IMR-90 (cell line): ENCODE measurements at regions of chr3 and their contacts with region 1.

Region 1: GRCh38 chr3:133377396-133377795 is 22.5 kb upstream of the BFSP2 start:
- DNase-seq: peak; percentile 69
- ATAC-seq: peak; percentile 90
- H3K4me3 ChIP-seq: no peak overlapping the region
- H3K27ac ChIP-seq: no peak overlapping the region
- H3K4me1 ChIP-seq: no peaks in the 10 kb centered on the region
- H3K27me3 ChIP-seq: no peaks in the 10 kb centered on the region
- CTCF ChIP-seq: peak; percentile 70
- POLR2A ChIP-seq: no peak
- RAD21 ChIP-seq: peak; percentile 84

Region 2: GRCh38 chr3:133040696-133041523 is 336.5 kb before region 1 on chr3:
- CTCF ChIA-PET with region 1: interaction called, 23 read pairs
- POLR2A ChIA-PET with region 1: no interaction called
- dilution Hi-C with region 1: no loop called
- in situ Hi-C with region 1: no loop called
- intact Hi-C with region 1: loop called (anchors 1 kb)
- DNase-seq: peak; percentile 71
- ATAC-seq: peak; percentile 92
- H3K4me3 ChIP-seq: no peak overlapping the region
- H3K27ac ChIP-seq: no peak overlapping the region
- H3K4me1 ChIP-seq: no peaks in the 10 kb centered on the region
- H3K27me3 ChIP-seq: peaks cover 21% of the 10 kb centered on the region
- CTCF ChIP-seq: peak; percentile 91
- POLR2A ChIP-seq: no peak
- RAD21 ChIP-seq: peak; percentile 94